ENCODE measurements at regions of chr3 and their contacts with region 1.

Region 1: GRCh38 chr3:5197470-5198312 is 10.2 kb downstream of the EDEM1 start:
- DNase-seq: peak; percentile 94
- H3K4me3 ChIP-seq: peak overlapping the region; percentile 52
- H3K27ac ChIP-seq: peak overlapping the region; percentile 99
- H3K4me1 ChIP-seq: peaks cover 77% of the 10 kb centered on the region
- CTCF ChIP-seq: no peak

Region 2: DNA sequence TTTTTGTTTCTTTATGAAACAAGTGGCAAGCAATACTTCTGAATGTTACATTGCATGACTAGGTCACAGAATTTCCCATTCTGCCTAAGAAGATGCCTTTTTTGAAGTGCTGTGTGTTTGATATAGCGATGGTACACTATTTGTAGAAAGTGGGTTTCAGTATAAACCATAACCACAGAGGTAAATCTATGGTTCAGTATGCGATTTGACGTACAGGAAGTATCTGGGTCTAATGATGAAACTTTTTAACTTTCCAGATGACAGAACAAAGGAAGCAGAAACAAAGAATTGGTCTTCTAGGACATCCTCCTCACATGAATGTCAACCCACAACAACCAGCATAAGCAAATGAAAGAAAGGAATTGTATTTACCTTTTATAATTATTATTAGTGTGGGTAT is 351.8 kb before region 1 on chr3:
- CTCF ChIA-PET with region 1: no interaction called
- POLR2A ChIA-PET with region 1: no interaction called
- intact Hi-C with region 1: no loop called
- DNase-seq: no peak
- H3K4me3 ChIP-seq: no peak overlapping the region
- H3K27ac ChIP-seq: no peak overlapping the region
- H3K4me1 ChIP-seq: no peaks in the 10 kb centered on the region
- CTCF ChIP-seq: no peak

Region 3: DNA sequence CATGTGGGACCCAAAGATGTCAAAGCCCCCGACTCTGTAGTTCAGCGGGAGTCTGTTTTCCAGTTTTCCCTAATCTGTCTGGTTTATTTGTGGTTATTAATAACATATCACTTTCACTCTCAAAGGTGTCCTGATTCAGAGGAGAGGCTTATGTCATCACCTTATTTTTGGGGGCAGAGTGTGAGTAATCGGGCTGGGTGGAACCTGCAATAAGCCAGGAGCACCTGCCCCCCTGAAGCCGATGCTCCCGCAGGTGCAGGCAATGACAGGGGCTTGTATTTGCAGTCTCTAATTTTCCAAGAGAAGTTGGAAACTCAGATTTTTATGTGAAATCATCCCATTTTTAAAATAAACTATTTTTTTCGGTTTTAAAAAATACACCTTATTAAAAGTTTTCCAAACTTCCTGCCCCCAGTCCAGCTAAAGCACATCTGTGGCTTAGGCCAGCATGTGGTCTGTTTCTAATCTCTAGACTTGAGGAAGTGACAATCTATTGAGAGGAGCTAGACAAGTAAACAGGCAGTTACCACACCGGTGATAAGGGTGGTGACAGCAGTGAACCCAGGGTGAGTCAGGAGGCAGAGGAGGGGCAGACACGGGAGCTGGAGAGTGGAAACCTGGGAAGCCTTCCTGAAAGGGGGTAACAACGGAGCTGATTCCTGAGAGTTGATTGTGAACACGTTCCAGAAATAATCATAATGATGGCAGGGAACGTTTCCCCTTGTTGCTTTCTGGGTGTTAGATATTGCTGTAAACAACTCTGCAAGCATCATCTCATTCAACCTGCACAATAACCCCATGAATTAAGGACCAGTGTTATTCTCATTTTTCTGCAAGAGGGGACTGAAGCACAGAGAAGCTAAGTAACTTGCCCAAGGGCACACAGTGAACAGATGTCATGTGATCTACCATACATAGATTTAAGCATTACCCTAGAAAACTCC is 181.2 kb before region 1 on chr3:
- CTCF ChIA-PET with region 1: no interaction called
- POLR2A ChIA-PET with region 1: no interaction called
- intact Hi-C with region 1: no loop called
- DNase-seq: peak; percentile 45
- H3K4me3 ChIP-seq: no peak overlapping the region
- H3K27ac ChIP-seq: no peak overlapping the region
- H3K4me1 ChIP-seq: peaks cover 22% of the 10 kb centered on the region
- CTCF ChIP-seq: no peak

Region 4: GRCh38 chr3:5122030-5122740 is 75.5 kb before region 1 on chr3 and contains the start of gene ARL8B:
- CTCF ChIA-PET with region 1: no interaction called
- POLR2A ChIA-PET with region 1: interaction called, 16 read pairs
- intact Hi-C with region 1: no loop called
- DNase-seq: peak; percentile 92
- H3K4me3 ChIP-seq: peak within 1 kb of the TSS; percentile 99
- H3K27ac ChIP-seq: peak within 1 kb of the TSS; percentile 31
- H3K4me1 ChIP-seq: peaks cover 27% of the 10 kb centered on the region
- CTCF ChIP-seq: peak; percentile 95
- total RNA-seq, gene ARL8B: 20.1 and 27.1 TPM in 2 replicates

Region 5: GRCh38 chr3:5136211-5136918 is 61.3 kb before region 1 on chr3:
- CTCF ChIA-PET with region 1: no interaction called
- POLR2A ChIA-PET with region 1: interaction called, 14 read pairs
- intact Hi-C with region 1: no loop called
- DNase-seq: peak; percentile 83
- H3K4me3 ChIP-seq: no peak overlapping the region
- H3K27ac ChIP-seq: peak overlapping the region; percentile 53
- H3K4me1 ChIP-seq: peaks cover 47% of the 10 kb centered on the region
- CTCF ChIP-seq: peak; percentile 92

Region 6: DNA sequence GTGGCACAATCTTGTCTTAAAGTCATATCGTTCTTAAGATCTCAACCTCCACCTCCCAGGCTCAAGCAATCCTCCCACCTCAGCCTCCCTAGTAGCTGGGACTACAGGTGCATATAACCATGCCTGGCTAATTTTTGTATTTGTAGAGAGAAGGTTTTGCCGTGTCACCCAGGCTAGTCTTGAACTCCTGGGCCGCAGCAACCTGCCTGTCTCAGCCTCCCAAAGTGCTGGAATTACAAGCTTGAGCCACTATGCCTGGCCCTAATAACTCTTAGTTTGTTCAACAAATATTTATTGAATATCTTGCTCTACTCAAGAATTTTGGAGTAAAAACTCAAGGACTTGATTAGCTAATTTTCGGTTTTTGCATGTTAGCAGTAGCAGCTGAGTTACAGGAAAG is 29.6 kb before region 1 on chr3:
- CTCF ChIA-PET with region 1: no interaction called
- POLR2A ChIA-PET with region 1: interaction called, 14 read pairs
- intact Hi-C with region 1: no loop called
- DNase-seq: no peak
- H3K4me3 ChIP-seq: no peak overlapping the region
- H3K27ac ChIP-seq: peak overlapping the region; percentile 3
- H3K4me1 ChIP-seq: peaks cover 56% of the 10 kb centered on the region
- CTCF ChIP-seq: no peak

Region 7: DNA sequence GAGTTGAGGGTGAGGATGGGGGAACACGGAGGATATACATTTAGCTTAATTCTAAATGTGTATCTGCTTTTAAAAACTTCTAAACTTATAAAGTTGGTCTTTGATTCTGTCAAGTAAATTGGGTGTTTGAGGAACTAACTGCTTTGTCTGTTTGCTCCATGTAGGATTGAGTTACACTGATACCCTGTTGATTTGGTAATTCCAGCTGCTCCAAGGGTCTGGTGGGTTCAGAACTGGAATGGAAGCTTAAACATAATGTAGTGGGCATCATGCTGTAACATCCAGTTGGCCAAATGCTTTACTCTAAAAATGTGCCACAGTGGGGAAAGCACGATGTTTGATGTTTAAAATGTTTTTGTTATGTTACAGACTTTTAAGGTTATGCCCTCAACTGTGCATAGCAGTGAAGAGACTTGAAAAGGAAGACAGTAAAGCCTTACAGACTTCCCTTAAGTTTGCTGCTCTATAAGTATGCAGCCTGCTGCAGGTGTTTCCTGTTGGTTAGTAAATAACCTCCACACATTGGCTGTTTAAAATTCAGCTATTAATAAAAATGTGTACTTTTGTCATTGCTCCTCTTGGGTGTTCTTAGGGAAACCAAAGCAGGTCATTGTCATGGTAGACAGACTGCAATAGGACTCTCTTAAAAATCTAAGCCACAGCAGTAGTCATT is 16.1 kb before region 1 on chr3:
- CTCF ChIA-PET with region 1: interaction called, 6 read pairs
- POLR2A ChIA-PET with region 1: interaction called, 444 read pairs
- intact Hi-C with region 1: loop called (anchors 2 kb)
- DNase-seq: peak; percentile 92
- H3K4me3 ChIP-seq: peak overlapping the region; percentile 51
- H3K27ac ChIP-seq: peak overlapping the region; percentile 98
- H3K4me1 ChIP-seq: peaks cover 98% of the 10 kb centered on the region
- CTCF ChIP-seq: no peak

Region 8: DNA sequence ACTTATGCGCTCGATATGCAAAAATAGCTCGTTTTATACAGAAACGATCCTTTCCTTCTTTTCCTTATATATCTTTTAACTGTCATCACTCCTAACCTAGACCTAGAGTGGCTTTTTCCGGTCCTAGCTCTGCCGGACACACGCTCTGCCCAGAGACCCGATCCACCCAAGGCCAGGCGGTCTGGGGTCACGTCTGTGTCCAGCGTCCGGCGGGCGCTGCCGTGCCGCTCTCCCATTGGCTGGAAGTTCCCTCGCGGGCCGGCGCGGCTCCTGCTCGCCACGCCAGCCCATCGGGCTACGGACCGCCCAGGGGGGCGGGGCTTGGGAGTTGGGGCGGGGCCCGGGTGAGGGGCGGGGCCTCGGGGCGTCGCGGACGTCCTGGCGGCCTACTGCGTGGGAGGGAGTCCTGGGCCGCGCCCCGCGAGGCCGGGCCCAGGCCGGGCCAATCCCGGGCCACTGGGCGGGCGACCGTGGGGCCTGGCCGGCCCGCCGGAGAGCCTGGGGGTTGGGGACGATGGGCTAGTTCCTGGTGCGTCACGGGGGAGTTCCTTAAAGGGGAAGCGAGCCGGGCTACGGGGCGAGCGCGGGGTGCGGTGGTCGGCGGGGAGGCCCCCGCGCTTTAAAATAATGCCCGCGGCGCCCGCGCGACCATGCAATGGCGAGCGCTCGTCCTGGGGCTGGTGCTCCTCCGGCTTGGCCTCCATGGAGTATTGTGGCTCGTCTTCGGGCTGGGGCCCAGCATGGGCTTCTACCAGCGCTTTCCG is 10.4 kb before region 1 on chr3 and contains the start of gene EDEM1:
- CTCF ChIA-PET with region 1: interaction called, 6 read pairs
- POLR2A ChIA-PET with region 1: interaction called, 444 read pairs
- intact Hi-C with region 1: loop called (anchors 1 kb)
- DNase-seq: peak; percentile 96
- H3K4me3 ChIP-seq: peak within 1 kb of the TSS; percentile 98
- H3K27ac ChIP-seq: peak within 1 kb of the TSS; percentile 99
- H3K4me1 ChIP-seq: peaks cover 53% of the 10 kb centered on the region
- CTCF ChIP-seq: no peak
- total RNA-seq, gene EDEM1: 125 and 186 TPM in 2 replicates

Region 9: DNA sequence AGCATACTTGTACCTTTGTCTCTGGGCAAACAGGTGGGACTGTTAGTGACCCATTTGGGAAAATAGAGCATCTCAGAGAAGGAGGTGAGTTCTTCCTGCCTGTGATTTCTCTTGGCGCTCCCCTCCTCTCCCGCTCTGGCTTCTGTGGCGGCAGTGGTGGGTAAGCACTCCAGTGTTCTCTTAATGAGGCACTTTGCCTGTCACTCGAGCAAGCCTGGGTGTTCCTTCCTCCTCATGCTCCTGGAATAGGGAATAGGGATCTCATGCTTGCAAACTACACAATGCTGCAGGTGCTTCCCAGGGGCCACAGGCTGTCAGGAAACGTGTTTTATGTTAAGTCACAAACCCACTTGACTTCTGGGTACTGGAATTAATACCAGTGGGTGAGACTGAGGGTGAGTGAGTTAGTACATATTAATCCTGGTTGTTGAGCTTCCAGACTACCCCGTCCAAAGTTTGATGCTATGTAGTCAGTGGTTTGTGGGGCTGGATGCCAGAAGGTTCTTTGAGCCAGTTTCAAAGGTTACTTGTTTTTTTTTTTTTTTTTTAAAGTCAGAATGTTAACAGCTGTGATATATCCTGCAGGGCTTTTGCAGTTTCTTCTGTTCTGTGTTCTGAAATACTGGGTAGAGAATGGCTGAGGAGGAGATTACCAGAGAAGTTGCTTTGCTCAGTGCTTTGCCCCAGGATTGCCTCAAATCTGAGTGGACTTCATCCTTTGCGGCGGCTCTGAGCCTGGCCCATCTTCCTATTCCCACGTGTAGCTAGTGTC is 20.3 kb after region 1 on chr3:
- CTCF ChIA-PET with region 1: no interaction called
- POLR2A ChIA-PET with region 1: interaction called, 10 read pairs
- intact Hi-C with region 1: no loop called
- DNase-seq: no peak
- H3K4me3 ChIP-seq: no peak overlapping the region
- H3K27ac ChIP-seq: peak overlapping the region; percentile 7
- H3K4me1 ChIP-seq: peaks cover 5% of the 10 kb centered on the region
- CTCF ChIP-seq: no peak

Measured in OCI-LY7 (cell line).